Naive thymus-derived CD4-positive, alpha-beta T cell (primary cell): ENCODE measurements at regions of chr12 and their contacts with region 1.

Region 1: GRCh38 chr12:9634177-9634803 is 26.6 kb upstream of the KLRB1 start:
- DNase-seq: peak; percentile 45 to 84 (median 75)
- ATAC-seq: peak; percentile 90
- H3K4me3 ChIP-seq: no peak overlapping the region
- H3K4me3 Mint-ChIP-seq: peak overlapping the region in 9 of 10 donors; percentile 15 to 78 (median 73)
- H3K27ac ChIP-seq: peak overlapping the region; percentile 40
- H3K27ac Mint-ChIP-seq: peak overlapping the region; percentile 78 to 97 (median 91)
- H3K4me1 ChIP-seq: peaks cover 23 to 33% of the 10 kb centered on the region in 2 donors
- H3K4me1 Mint-ChIP-seq: peaks cover 24 to 80% (median 66%) of the 10 kb centered on the region in 7 donors
- H3K27me3 ChIP-seq: no peaks in the 10 kb centered on the region
- H3K27me3 Mint-ChIP-seq: peaks cover 0 to 20% (median 0%) of the 10 kb centered on the region in 5 donors

Region 2: DNA sequence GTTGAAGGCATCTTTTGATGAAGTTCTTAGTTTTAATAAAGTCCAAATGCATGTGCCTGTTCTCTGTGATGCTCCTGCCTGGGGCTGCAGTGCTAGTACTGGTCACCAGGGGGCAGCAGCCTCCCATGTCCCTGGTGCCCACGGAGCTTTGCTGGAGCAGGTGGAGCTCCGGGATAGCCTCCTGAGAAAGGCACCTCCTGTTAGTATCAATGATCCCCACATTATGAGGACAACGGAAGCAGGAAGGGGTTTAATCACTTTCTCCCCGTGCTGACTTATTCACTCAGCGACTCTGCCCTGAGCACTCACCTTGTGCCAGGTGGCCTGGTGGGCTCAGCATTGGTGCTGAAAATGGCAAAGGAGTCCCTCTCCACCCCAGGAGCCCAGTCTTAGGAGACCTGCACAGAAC is 303.1 kb before region 1 on chr12:
- CTCF ChIA-PET with region 1: no interaction called
- POLR2A ChIA-PET with region 1: no interaction called
- intact Hi-C with region 1: loop called (anchors 5 kb)
- DNase-seq: peak; percentile 21 to 77 (median 55)
- ATAC-seq: peak; percentile 87
- H3K4me3 ChIP-seq: no peak overlapping the region
- H3K4me3 Mint-ChIP-seq: peak overlapping the region in 2 of 10 donors; percentile 6 to 33
- H3K27ac ChIP-seq: no peak overlapping the region
- H3K27ac Mint-ChIP-seq: peak overlapping the region in 4 of 9 donors; percentile 50 to 66 (median 62)
- H3K4me1 ChIP-seq: peaks cover 0 to 3% of the 10 kb centered on the region in 2 donors
- H3K4me1 Mint-ChIP-seq: peaks cover 18 to 31% (median 23%) of the 10 kb centered on the region in 7 donors
- H3K27me3 ChIP-seq: no peaks in the 10 kb centered on the region
- H3K27me3 Mint-ChIP-seq: peaks cover 0 to 2% (median 0%) of the 10 kb centered on the region in 5 donors

Region 3: DNA sequence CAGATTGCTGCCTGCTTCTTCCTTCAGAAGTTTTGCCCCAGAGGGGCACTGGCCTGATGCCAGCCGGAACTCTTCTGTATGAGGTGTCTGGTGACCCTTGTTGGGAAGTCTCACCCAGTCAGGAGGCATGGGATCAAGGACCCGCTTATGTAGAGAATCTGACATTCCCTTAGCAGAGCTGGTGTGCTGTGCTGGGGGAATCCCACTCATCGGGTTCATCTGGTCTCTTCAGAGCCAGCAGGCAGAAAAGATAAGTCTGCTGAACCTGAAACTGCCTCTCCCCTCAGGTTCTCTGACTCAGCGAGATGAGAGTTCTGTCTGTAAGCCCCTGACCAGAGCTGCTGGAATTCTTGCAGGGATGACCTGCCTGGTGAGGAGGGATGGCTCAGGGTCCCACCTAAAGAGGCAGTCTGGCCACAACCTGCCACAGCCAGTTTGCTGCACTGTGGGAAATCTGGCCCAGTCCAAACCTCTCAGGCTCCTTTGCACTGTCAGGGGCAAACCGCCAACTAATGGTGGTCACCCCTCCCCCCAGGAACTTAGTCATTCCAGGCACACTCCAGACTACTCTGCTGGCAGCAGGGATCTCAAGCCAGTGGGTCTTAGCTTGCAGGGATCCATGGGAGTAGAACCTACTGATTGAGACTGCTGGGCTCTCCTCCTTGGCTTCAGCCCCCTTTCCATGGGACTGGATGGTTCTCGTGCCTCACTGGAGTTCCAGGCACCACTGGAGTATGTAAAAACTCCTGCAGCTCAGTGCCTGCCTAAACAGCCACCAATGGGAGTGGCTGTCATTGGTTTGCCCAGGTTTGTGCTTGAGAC is 39.3 kb after region 1 on chr12:
- CTCF ChIA-PET with region 1: interaction called, 4 read pairs
- POLR2A ChIA-PET with region 1: interaction called, 43 read pairs
- intact Hi-C with region 1: loop called (anchors 1 kb)
- DNase-seq: peak in 7 of 9 donors; percentile 36 to 67 (median 45)
- ATAC-seq: peak; percentile 63
- H3K4me3 ChIP-seq: peak overlapping the region; percentile 80
- H3K4me3 Mint-ChIP-seq: peak overlapping the region; percentile 89 to 99 (median 92)
- H3K27ac ChIP-seq: peak overlapping the region; percentile 83
- H3K27ac Mint-ChIP-seq: peak overlapping the region; percentile 90 to 99 (median 95)
- H3K4me1 ChIP-seq: peaks cover 30 to 38% of the 10 kb centered on the region in 2 donors
- H3K4me1 Mint-ChIP-seq: peaks cover 42 to 80% (median 69%) of the 10 kb centered on the region in 7 donors
- H3K27me3 ChIP-seq: no peaks in the 10 kb centered on the region
- H3K27me3 Mint-ChIP-seq: peaks cover 0 to 8% (median 0%) of the 10 kb centered on the region in 5 donors

Region 4: GRCh38 chr12:9741726-9742125 is 107.4 kb after region 1 on chr12:
- CTCF ChIA-PET with region 1: interaction called, 36 read pairs
- POLR2A ChIA-PET with region 1: interaction called, 16 read pairs
- intact Hi-C with region 1: loop called (anchors 1 to 2 kb)
- DNase-seq: peak in 8 of 9 donors; percentile 63 to 95 (median 90)
- ATAC-seq: peak; percentile 84
- H3K4me3 ChIP-seq: peak overlapping the region; percentile 15
- H3K4me3 Mint-ChIP-seq: peak overlapping the region; percentile 22 to 95 (median 83)
- H3K27ac ChIP-seq: peak overlapping the region; percentile 76
- H3K27ac Mint-ChIP-seq: peak overlapping the region; percentile 89 to 100 (median 98)
- H3K4me1 ChIP-seq: peaks cover 55 to 59% of the 10 kb centered on the region in 2 donors
- H3K4me1 Mint-ChIP-seq: peaks cover 51 to 81% (median 71%) of the 10 kb centered on the region in 7 donors
- H3K27me3 ChIP-seq: no peaks in the 10 kb centered on the region
- H3K27me3 Mint-ChIP-seq: peaks cover 0 to 6% (median 0%) of the 10 kb centered on the region in 5 donors

Region 5: GRCh38 chr12:9925708-9926393 is 291.6 kb after region 1 on chr12:
- CTCF ChIA-PET with region 1: no interaction called
- POLR2A ChIA-PET with region 1: no interaction called
- intact Hi-C with region 1: loop called in 1 of 2 experiments (anchors 5 kb)
- DNase-seq: peak in 8 of 9 donors; percentile 7 to 64 (median 50)
- ATAC-seq: peak; percentile 73
- H3K4me3 ChIP-seq: no peak overlapping the region
- H3K4me3 Mint-ChIP-seq: peak overlapping the region; percentile 30 to 85 (median 73)
- H3K27ac ChIP-seq: no peak overlapping the region
- H3K27ac Mint-ChIP-seq: peak overlapping the region in 6 of 9 donors; percentile 5 to 93 (median 44)
- H3K4me1 ChIP-seq: peaks cover 0 to 6% of the 10 kb centered on the region in 2 donors
- H3K4me1 Mint-ChIP-seq: peaks cover 0 to 26% (median 18%) of the 10 kb centered on the region in 7 donors
- H3K27me3 ChIP-seq: no peaks in the 10 kb centered on the region
- H3K27me3 Mint-ChIP-seq: peaks cover 0 to 23% (median 0%) of the 10 kb centered on the region in 5 donors

Region 6: DNA sequence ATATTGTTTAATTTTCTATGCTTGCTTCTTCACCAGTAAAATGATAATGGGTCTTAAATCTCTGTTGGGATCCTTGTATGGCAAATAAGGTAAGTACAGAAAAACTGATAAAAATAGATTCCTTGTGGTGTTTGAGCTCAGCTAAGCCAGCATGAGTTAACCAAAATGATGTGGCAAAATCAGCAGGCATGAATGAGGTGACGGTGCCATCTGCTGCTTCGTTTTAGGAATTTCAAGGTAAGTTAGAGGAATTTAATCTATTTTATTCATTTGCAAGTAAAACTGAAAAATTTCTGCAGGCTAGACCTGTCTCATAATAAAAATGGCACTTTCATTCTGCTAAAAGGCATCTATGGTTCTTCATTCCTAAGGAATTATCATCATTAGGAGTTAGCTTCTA is 505.7 kb after region 1 on chr12:
- CTCF ChIA-PET with region 1: no interaction called
- POLR2A ChIA-PET with region 1: no interaction called
- intact Hi-C with region 1: loop called (anchors 1 to 10 kb)
- DNase-seq: peak in 7 of 9 donors; percentile 26 to 66 (median 49)
- ATAC-seq: peak; percentile 72
- H3K4me3 ChIP-seq: no peak overlapping the region
- H3K4me3 Mint-ChIP-seq: no peak overlapping the region
- H3K27ac ChIP-seq: no peak overlapping the region
- H3K27ac Mint-ChIP-seq: no peak overlapping the region
- H3K4me1 ChIP-seq: no peaks in the 10 kb centered on the region
- H3K4me1 Mint-ChIP-seq: peaks cover 0 to 3% (median 0%) of the 10 kb centered on the region in 7 donors
- H3K27me3 ChIP-seq: no peaks in the 10 kb centered on the region
- H3K27me3 Mint-ChIP-seq: peaks cover 0 to 51% (median 0%) of the 10 kb centered on the region in 5 donors